ENCODE measurements at regions of chrX and their contacts with region 1.

Region 1: GRCh38 chrX:149962859-149963757 is 24.8 kb upstream of the EOLA2 start:
- DNase-seq: peak; percentile 59
- H3K4me3 ChIP-seq: no peak overlapping the region
- H3K27ac ChIP-seq: no peak overlapping the region
- H3K4me1 ChIP-seq: no peaks in the 10 kb centered on the region
- H3K27me3 ChIP-seq: no peaks in the 10 kb centered on the region
- CTCF ChIP-seq: peak; percentile 54 to 60
- POLR2A ChIP-seq: no peak

Region 2: DNA sequence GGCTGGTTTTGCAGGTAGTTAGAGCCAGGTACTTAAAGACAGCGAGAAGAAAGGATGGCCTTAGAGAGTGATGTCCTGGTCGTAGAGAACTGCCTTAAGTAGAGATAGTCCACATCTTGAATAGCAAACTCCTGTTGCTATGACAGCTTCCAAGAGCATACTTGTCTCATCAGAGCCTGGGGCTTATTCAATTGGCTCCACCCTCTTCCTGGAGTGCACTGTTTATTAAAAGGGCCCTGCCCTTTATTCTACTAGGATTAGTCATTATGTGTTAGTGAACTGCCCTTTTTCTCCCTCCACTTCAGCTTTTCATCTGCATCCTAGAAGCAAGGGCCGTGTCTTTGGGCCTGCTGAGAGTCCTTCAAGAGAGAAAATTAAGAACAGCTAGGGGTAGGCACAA is 69.6 kb after region 1 on chrX:
- CTCF ChIA-PET with region 1: no interaction called
- POLR2A ChIA-PET with region 1: no interaction called
- dilution Hi-C with region 1: no loop called
- intact Hi-C with region 1: loop called (anchors 5 kb)
- DNase-seq: peak; percentile 40
- H3K4me3 ChIP-seq: no peak overlapping the region
- H3K27ac ChIP-seq: no peak overlapping the region
- H3K4me1 ChIP-seq: peaks cover 34% of the 10 kb centered on the region
- H3K27me3 ChIP-seq: no peaks in the 10 kb centered on the region
- CTCF ChIP-seq: no peak
- POLR2A ChIP-seq: no peak

Region 3: GRCh38 chrX:150155436-150156035 is 192.4 kb after region 1 on chrX:
- CTCF ChIA-PET with region 1: no interaction called
- POLR2A ChIA-PET with region 1: no interaction called
- dilution Hi-C with region 1: no loop called
- intact Hi-C with region 1: loop called (anchors 10 kb)
- DNase-seq: peak; percentile 15
- H3K4me3 ChIP-seq: no peak overlapping the region
- H3K27ac ChIP-seq: no peak overlapping the region
- H3K4me1 ChIP-seq: no peaks in the 10 kb centered on the region
- H3K27me3 ChIP-seq: no peaks in the 10 kb centered on the region
- CTCF ChIP-seq: no peak
- POLR2A ChIP-seq: no peak

Region 4: DNA sequence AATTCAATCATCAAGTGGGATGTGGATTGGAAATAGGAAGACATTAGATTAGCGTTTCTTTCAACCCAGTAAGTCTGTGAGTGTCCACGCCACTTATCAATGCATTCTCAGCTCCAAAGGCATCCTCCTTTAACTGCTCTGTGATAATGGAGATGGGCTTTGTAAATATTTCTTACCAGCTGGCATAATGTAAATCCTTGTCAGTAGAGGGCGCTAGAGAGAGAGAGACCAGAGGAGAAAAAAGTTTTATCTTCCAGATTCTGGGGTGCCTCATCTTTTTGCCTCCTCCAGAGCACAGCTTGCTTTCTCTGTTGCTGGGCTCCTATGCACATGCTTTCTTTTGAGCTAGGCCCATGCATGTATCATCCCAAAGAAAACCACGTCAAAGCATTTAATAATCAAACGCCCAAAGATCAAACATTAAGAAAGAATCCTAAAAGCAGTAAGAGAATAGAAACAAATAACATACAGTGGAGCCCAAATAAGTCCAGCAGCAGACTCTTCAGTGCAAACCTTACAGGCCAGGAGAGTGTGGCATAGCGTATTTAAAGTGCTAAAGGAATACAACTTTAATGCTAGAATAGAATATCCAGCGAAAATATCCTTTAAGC is 720.5 kb after region 1 on chrX:
- CTCF ChIA-PET with region 1: interaction called, 3 read pairs
- POLR2A ChIA-PET with region 1: no interaction called
- dilution Hi-C with region 1: no loop called
- intact Hi-C with region 1: loop called (anchors 2 kb)
- DNase-seq: peak; percentile 31
- H3K4me3 ChIP-seq: no peak overlapping the region
- H3K27ac ChIP-seq: no peak overlapping the region
- H3K4me1 ChIP-seq: peaks cover 3% of the 10 kb centered on the region
- H3K27me3 ChIP-seq: no peaks in the 10 kb centered on the region
- CTCF ChIP-seq: peak; percentile 27 to 42
- POLR2A ChIP-seq: no peak

Measured in endothelial cell of umbilical vein (primary cell).